ENCODE measurements at regions of chr12 and their contacts with region 1.

Region 1: GRCh38 chr12:99271071-99271470 is 376.5 kb upstream of the GARIN6 start:
- DNase-seq: no peak
- H3K4me3 ChIP-seq: no peak overlapping the region
- H3K27ac ChIP-seq: no peak overlapping the region
- H3K4me1 ChIP-seq: no peaks in the 10 kb centered on the region
- H3K27me3 ChIP-seq: no peaks in the 10 kb centered on the region
- CTCF ChIP-seq: no peak

Region 2: GRCh38 chr12:99680276-99680675 is 409.2 kb after region 1 on chr12:
- CTCF ChIA-PET with region 1: interaction called, 20 read pairs
- POLR2A ChIA-PET with region 1: no interaction called
- intact Hi-C with region 1: no loop called
- DNase-seq: no peak
- H3K4me3 ChIP-seq: no peak overlapping the region
- H3K27ac ChIP-seq: no peak overlapping the region
- H3K4me1 ChIP-seq: no peaks in the 10 kb centered on the region
- H3K27me3 ChIP-seq: no peaks in the 10 kb centered on the region
- CTCF ChIP-seq: no peak

Region 3: DNA sequence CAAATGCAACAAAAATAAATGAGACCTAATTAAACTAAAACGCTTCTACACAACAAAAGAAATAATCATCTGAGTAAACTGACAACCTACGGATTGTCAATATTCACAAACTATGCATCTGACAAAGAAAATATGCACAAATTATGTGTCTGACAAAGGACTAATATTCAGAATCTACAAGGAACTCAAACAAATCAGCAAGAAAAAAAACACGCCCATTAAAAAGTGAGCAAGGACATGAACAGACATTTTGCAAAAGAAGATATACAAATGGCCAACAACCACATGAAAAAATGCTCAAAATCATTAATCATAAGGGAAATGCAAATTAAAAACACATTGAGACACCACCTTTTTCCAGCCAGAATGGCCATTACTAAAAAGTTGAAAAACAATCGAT is 834.6 kb after region 1 on chr12:
- CTCF ChIA-PET with region 1: no interaction called
- POLR2A ChIA-PET with region 1: no interaction called
- intact Hi-C with region 1: no loop called
- DNase-seq: no peak
- H3K4me3 ChIP-seq: no peak overlapping the region
- H3K27ac ChIP-seq: no peak overlapping the region
- H3K4me1 ChIP-seq: no peaks in the 10 kb centered on the region
- H3K27me3 ChIP-seq: no peaks in the 10 kb centered on the region
- CTCF ChIP-seq: no peak